CD4-positive, alpha-beta memory T cell (primary cell): ENCODE measurements at regions of chr4 and their contacts with region 1.

Region 1: DNA sequence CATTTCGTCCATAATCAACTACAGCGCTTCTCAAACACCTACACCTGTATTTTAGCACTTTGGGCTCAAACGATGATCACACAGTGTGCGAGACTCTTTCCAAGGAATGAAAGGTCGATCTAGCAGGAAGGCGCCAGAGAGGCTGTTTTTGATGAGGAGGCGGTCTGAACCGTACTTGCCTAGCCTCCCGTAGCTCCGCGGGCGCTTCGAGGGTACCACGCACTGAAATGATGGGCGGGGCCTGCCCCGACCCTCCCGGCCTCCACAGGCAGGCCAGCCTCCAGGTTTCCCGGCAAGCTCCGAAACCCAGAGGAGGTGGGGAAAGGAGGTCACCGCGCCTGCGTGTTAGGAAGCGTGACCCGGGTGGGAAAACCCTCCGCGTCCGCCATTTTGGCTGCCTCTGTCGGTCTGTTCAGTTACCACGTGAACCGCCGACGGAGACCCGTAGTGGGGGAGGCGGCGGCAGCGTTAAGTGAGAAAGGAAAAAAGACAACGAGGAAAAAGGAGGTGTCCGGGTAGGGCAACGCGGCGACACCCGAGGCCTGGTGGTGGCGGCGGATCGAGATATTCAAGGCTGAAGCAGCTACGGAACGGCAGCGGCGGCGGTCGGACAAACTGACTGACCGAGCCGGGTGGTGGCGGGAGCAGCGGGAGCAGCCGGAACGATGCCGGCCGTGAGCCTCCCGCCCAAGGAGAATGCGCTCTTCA is at the start of gene NAA15:
- DNase-seq: peak; percentile 97 to 99 (median 97)
- H3K4me3 ChIP-seq: peak within 1 kb of the TSS; percentile 69 to 94
- H3K4me3 Mint-ChIP-seq: peak within 1 kb of the TSS; percentile 96 to 100 (median 99)
- H3K27ac ChIP-seq: peak within 1 kb of the TSS; percentile 98
- H3K27ac Mint-ChIP-seq: peak within 1 kb of the TSS; percentile 94 to 100 (median 99)
- H3K4me1 ChIP-seq: peaks cover 56% of the 10 kb centered on the region
- H3K4me1 Mint-ChIP-seq: peaks cover 22 to 73% (median 43%) of the 10 kb centered on the region in 4 donors
- H3K27me3 ChIP-seq: no peaks in the 10 kb centered on the region
- H3K27me3 Mint-ChIP-seq: no peaks in the 10 kb centered on the region
- total RNA-seq, gene NAA15: 45.8 to 46.5 TPM

Region 2: GRCh38 chr4:139015269-139015947 is 285.9 kb before region 1 on chr4 and contains the start of gene NOCT:
- CTCF ChIA-PET with region 1: interaction called, 4 read pairs
- POLR2A ChIA-PET with region 1: interaction called, 14 read pairs
- intact Hi-C with region 1: loop called (anchors 5 kb)
- DNase-seq: peak; percentile 90 to 96 (median 93)
- H3K4me3 ChIP-seq: peak within 1 kb of the TSS; percentile 20 to 66
- H3K4me3 Mint-ChIP-seq: peak within 1 kb of the TSS; percentile 87 to 94 (median 90)
- H3K27ac ChIP-seq: peak within 1 kb of the TSS; percentile 84
- H3K27ac Mint-ChIP-seq: peak within 1 kb of the TSS; percentile 93 to 100 (median 99)
- H3K4me1 ChIP-seq: peaks cover 18% of the 10 kb centered on the region
- H3K4me1 Mint-ChIP-seq: peaks cover 13 to 44% (median 17%) of the 10 kb centered on the region in 4 donors
- H3K27me3 ChIP-seq: no peaks in the 10 kb centered on the region
- H3K27me3 Mint-ChIP-seq: no peaks in the 10 kb centered on the region
- total RNA-seq, gene NOCT: 1.4 to 1.7 TPM

Region 3: GRCh38 chr4:139177868-139178611 is 123.2 kb before region 1 on chr4:
- CTCF ChIA-PET with region 1: interaction called, 6 read pairs
- POLR2A ChIA-PET with region 1: interaction called, 48 read pairs
- intact Hi-C with region 1: loop called (anchors 1 kb)
- DNase-seq: peak; percentile 92 to 94 (median 92)
- H3K4me3 ChIP-seq: peak overlapping the region; percentile 88 to 89
- H3K4me3 Mint-ChIP-seq: peak overlapping the region; percentile 89 to 94 (median 92)
- H3K27ac ChIP-seq: peak overlapping the region; percentile 96
- H3K27ac Mint-ChIP-seq: peak overlapping the region; percentile 92 to 97 (median 96)
- H3K4me1 ChIP-seq: peaks cover 17% of the 10 kb centered on the region
- H3K4me1 Mint-ChIP-seq: peaks cover 14 to 29% (median 18%) of the 10 kb centered on the region in 4 donors
- H3K27me3 ChIP-seq: no peaks in the 10 kb centered on the region
- H3K27me3 Mint-ChIP-seq: no peaks in the 10 kb centered on the region

Region 4: DNA sequence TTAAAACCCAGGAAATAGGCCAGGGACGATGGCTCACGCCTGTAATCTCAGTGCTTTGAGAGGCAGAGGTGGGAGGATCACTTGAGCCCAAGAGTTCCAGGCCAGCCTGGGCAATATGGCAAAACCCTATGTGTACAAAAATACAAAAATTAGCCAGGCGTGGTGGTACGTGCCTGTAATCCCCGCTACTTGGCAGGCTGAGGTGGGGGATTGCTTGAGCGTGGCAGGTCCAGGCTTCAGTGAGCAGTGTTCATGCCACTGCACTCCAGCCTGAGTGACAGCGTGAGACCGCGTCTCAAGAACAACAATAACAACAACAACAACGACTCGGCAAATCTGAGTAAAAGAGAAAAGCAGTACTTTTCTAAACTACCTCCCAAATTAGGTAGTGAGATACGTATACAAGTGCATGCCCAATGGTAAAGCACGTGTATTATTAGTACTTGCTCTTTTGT is 14.0 kb after region 1 on chr4:
- CTCF ChIA-PET with region 1: interaction called, 25 read pairs
- POLR2A ChIA-PET with region 1: interaction called, 50 read pairs
- intact Hi-C with region 1: loop called (anchors 1 kb)
- DNase-seq: no peak
- H3K4me3 ChIP-seq: peak overlapping the region in 1 of 2 donors; percentile 11
- H3K4me3 Mint-ChIP-seq: peak overlapping the region in 5 of 8 donors; percentile 34 to 75 (median 61)
- H3K27ac ChIP-seq: peak overlapping the region; percentile 54
- H3K27ac Mint-ChIP-seq: peak overlapping the region; percentile 64 to 95 (median 75)
- H3K4me1 ChIP-seq: peaks cover 70% of the 10 kb centered on the region
- H3K4me1 Mint-ChIP-seq: peaks cover 64 to 82% (median 73%) of the 10 kb centered on the region in 4 donors
- H3K27me3 ChIP-seq: no peaks in the 10 kb centered on the region
- H3K27me3 Mint-ChIP-seq: no peaks in the 10 kb centered on the region

Region 5: GRCh38 chr4:140373328-140374129 is 1072.3 kb after region 1 on chr4 and contains the start of gene SCOC:
- CTCF ChIA-PET with region 1: no interaction called
- POLR2A ChIA-PET with region 1: interaction called, 3 read pairs
- intact Hi-C with region 1: loop called (anchors 5 kb)
- DNase-seq: peak; percentile 95 to 99 (median 96)
- H3K4me3 ChIP-seq: peak within 1 kb of the TSS; percentile 72 to 75
- H3K4me3 Mint-ChIP-seq: peak within 1 kb of the TSS in 3 of 8 donors; percentile 83 to 90 (median 87)
- H3K27ac ChIP-seq: peak within 1 kb of the TSS; percentile 69
- H3K27ac Mint-ChIP-seq: peak within 1 kb of the TSS in 6 of 7 donors; percentile 47 to 87 (median 76)
- H3K4me1 ChIP-seq: peaks cover 23% of the 10 kb centered on the region
- H3K4me1 Mint-ChIP-seq: peaks cover 24 to 37% (median 28%) of the 10 kb centered on the region in 4 donors
- H3K27me3 ChIP-seq: no peaks in the 10 kb centered on the region
- H3K27me3 Mint-ChIP-seq: no peaks in the 10 kb centered on the region
- total RNA-seq, gene SCOC: 21.8 to 22.8 TPM